ENCODE measurements at regions of chr14 and their contacts with region 1.

Region 1: DNA sequence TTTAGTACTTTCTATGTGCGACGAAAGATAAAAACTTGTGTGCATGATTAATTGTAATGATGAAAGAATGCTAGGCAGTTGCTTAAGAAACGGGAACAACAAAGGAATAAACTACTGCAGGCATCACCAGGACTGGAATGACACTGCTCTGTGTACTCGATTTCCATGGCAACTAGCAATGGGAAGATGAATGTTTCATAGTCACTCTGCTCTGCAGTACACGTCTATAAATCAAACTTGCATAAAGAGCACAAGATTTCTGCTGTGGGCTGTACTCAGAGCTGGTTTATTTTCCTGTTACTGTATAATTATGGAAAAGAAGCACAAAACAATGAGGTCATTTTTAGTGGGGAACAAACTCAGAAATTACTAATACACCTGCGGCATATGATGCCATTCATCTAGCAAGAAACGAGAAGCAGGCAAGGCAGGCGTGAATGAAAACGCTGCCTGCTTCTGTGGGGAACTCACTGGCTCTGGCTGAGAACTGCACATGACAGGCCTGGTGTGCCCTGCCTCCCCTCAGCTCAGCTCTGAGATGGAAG is 41.8 kb downstream of the EFCAB11 start:
- DNase-seq: no peak
- H3K4me3 Mint-ChIP-seq: no peak overlapping the region
- H3K27ac Mint-ChIP-seq: no peak overlapping the region
- H3K4me1 Mint-ChIP-seq: no peaks in the 10 kb centered on the region
- H3K27me3 Mint-ChIP-seq: peaks cover 8% of the 10 kb centered on the region

Region 2: DNA sequence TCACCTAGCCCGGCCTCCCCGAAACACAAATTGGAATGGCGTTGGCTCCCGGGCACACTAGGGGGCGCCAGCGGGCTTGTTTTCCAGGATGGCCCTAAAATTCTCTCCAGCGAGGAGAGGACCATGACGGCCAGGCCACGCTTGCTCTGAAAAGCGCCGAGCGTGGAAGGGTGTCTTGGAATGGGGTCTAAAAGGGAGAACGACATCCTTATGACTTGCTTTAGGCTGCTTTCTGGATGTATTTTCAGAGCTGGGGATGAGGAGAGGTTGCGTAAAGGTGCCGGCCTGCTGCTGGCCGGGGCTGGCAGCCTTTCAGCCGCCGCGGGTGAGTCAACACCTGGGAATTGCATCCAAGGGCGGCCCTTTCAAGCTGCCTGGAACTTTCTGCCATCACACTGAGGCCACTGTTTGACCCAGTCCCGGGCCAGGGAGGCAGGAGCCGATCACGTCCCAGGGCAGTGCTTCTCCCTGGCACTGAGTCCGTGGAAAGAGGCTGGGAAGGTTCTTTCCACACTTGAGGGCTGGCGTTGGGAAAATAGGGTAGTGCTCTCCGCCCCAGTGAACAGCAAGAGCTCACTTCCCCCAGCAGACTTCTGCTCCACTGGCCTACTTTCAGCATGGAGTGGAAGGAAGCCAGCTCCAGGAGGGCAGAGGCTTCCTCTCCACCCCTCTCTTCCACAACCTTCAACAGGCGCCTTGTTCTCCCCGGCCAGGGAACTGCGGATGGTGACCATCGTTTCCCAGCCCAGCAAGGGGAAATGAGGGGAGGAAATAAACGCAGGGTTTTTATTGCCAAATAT is 872.1 kb before region 1 on chr14:
- CTCF ChIA-PET with region 1: interaction called, 10 read pairs
- DNase-seq: peak; percentile 86
- H3K4me3 Mint-ChIP-seq: peak overlapping the region; percentile 19
- H3K27ac Mint-ChIP-seq: no peak overlapping the region
- H3K4me1 Mint-ChIP-seq: peaks cover 11% of the 10 kb centered on the region
- H3K27me3 Mint-ChIP-seq: peaks cover 26% of the 10 kb centered on the region

Region 3: DNA sequence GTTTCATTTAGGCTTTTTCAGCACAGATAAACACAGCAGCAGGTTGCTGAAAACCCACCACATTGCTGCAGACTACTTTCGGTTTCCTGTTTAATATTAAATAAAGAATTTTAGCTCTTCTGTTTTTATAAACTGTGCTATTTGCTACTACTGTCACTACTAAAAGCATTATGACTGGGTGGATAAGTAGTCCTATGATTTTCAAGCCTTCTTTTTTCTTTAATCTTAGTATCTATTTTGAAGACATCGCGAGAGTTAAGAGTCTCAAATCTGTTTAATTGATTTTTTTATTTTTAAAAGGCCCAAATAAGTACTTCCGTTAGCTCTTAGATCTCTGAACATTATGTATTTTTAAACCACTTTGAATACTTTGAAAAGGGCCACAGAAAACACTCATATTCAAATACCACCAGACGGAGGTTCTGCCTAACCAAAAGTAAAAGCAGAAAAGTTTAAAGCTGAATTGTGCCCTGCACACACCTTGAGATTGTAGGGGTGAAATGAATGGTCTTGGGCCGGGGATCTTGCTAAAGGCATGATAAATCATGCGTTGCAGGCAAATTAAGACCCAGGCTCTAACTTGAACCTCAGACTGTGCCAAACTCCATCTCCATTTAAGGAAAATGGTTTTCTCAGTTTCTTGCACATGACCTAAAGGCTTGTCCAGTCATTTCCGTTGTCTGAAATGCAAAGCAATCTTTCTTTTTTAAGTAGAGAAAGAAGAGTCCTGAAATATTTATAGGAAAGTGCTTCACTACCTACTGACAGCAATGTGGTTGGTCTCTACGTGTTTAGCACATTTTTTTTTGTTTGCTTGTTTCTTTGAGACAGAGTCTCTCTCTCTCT is 482.1 kb before region 1 on chr14:
- CTCF ChIA-PET with region 1: no interaction called
- DNase-seq: peak; percentile 56
- H3K4me3 Mint-ChIP-seq: peak overlapping the region; percentile 67
- H3K27ac Mint-ChIP-seq: peak overlapping the region; percentile 86
- H3K4me1 Mint-ChIP-seq: peaks cover 63% of the 10 kb centered on the region
- H3K27me3 Mint-ChIP-seq: no peaks in the 10 kb centered on the region

Region 4: GRCh38 chr14:90569606-90570387 is 657.1 kb after region 1 on chr14:
- CTCF ChIA-PET with region 1: no interaction called
- DNase-seq: no peak
- H3K4me3 Mint-ChIP-seq: no peak overlapping the region
- H3K27ac Mint-ChIP-seq: no peak overlapping the region
- H3K4me1 Mint-ChIP-seq: no peaks in the 10 kb centered on the region
- H3K27me3 Mint-ChIP-seq: peaks cover 3% of the 10 kb centered on the region

Measured in activated naive CD4-positive, alpha-beta T cell treated with anti-CD3 and anti-CD28 coated beads, Interleukin-2, amount 10 ng/mL, durations not matched to agents 7 days and 5 days (primary cell).